ENCODE measurements at regions of chr16 and their contacts with region 1.

Region 1: GRCh38 chr16:81885976-81886586 is 107.0 kb downstream of the PLCG2 start:
- DNase-seq: peak; percentile 68 to 86 (median 82)
- ATAC-seq: peak; percentile 91
- H3K4me3 ChIP-seq: no peak overlapping the region
- H3K27ac ChIP-seq: no peak overlapping the region
- H3K4me1 ChIP-seq: peaks cover 5 to 6% of the 10 kb centered on the region in 2 experiments
- H3K27me3 ChIP-seq: peaks cover 25 to 52% of the 10 kb centered on the region in 2 experiments
- CTCF ChIP-seq: peak; percentile 80 to 88 (median 87)
- EP300 ChIP-seq: no peak
- POLR2A ChIP-seq: no peak
- RAD21 ChIP-seq: peak; percentile 33 to 64

Region 2: GRCh38 chr16:81366316-81366932 is 519.7 kb before region 1 on chr16:
- CTCF ChIA-PET with region 1: interaction called, 7 read pairs
- POLR2A ChIA-PET with region 1: no interaction called
- in situ Hi-C with region 1: loop called (anchors 10 kb)
- intact Hi-C with region 1: no loop called
- DNase-seq: peak; percentile 52 to 63 (median 60)
- ATAC-seq: peak; percentile 84
- H3K4me3 ChIP-seq: no peak overlapping the region
- H3K27ac ChIP-seq: no peak overlapping the region
- H3K4me1 ChIP-seq: no peaks in the 10 kb centered on the region
- H3K27me3 ChIP-seq: no peaks in the 10 kb centered on the region
- CTCF ChIP-seq: peak; percentile 70 to 89 (median 74)
- EP300 ChIP-seq: no peak
- POLR2A ChIP-seq: no peak
- RAD21 ChIP-seq: peak; percentile 86 to 92

Region 3: GRCh38 chr16:82061861-82062525 is 175.9 kb after region 1 on chr16:
- CTCF ChIA-PET with region 1: no interaction called
- POLR2A ChIA-PET with region 1: no interaction called
- in situ Hi-C with region 1: no loop called
- intact Hi-C with region 1: loop called (anchors 1 kb)
- DNase-seq: peak; percentile 48 to 54 (median 53)
- ATAC-seq: peak; percentile 71
- H3K4me3 ChIP-seq: no peak overlapping the region
- H3K27ac ChIP-seq: no peak overlapping the region
- H3K4me1 ChIP-seq: no peaks in the 10 kb centered on the region
- H3K27me3 ChIP-seq: peaks cover 3 to 13% of the 10 kb centered on the region in 2 experiments; a peak in 3 of 5 replicates
- CTCF ChIP-seq: peak; percentile 55 to 72 (median 71)
- EP300 ChIP-seq: no peak
- POLR2A ChIP-seq: no peak
- RAD21 ChIP-seq: peak; percentile 45 to 59

Measured in K562 (cell line).